CD4-positive, alpha-beta memory T cell (primary cell): ENCODE measurements at regions of chr17 and their contacts with region 1.

Region 1: DNA sequence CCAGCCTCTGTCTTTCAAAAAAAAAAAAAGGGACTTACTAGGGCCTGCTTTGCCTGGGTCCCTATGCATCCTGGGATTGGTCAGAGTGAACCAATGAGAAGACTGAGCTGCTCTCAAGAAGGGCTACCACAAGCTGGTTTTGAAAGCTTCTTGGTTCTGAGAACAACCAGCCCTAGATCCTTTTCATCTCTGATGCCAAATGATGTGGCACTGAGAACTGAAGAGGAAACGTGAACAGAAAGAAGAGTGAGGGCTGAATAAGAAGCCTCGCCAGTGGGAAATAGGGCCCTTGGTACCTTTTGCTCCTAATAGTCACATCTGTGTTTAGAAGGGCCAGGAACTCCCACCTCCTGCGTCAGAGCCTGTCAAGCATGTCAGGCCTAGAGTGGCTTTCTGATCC is 10.7 kb downstream of the TACO1 start:
- DNase-seq: peak in 4 of 5 donors; percentile 24 to 46 (median 39)
- H3K4me3 ChIP-seq: no peak overlapping the region
- H3K4me3 Mint-ChIP-seq: peak overlapping the region; percentile 9 to 80 (median 69)
- H3K27ac ChIP-seq: peak overlapping the region; percentile 46
- H3K27ac Mint-ChIP-seq: peak overlapping the region; percentile 62 to 99 (median 93)
- H3K4me1 ChIP-seq: peaks cover 36% of the 10 kb centered on the region
- H3K4me1 Mint-ChIP-seq: peaks cover 27 to 45% (median 32%) of the 10 kb centered on the region in 4 donors
- H3K27me3 ChIP-seq: no peaks in the 10 kb centered on the region
- H3K27me3 Mint-ChIP-seq: no peaks in the 10 kb centered on the region

Region 2: GRCh38 chr17:62703775-62704378 is 907.5 kb before region 1 on chr17:
- CTCF ChIA-PET with region 1: no interaction called
- POLR2A ChIA-PET with region 1: no interaction called
- intact Hi-C with region 1: loop called (anchors 5 kb)
- DNase-seq: peak in 4 of 5 donors; percentile 69 to 82 (median 72)
- H3K4me3 ChIP-seq: peak overlapping the region in 1 of 2 donors; percentile 32
- H3K4me3 Mint-ChIP-seq: peak overlapping the region in 5 of 8 donors; percentile 20 to 49 (median 34)
- H3K27ac ChIP-seq: no peak overlapping the region
- H3K27ac Mint-ChIP-seq: peak overlapping the region in 1 of 7 donors; percentile 10
- H3K4me1 ChIP-seq: peaks cover 10% of the 10 kb centered on the region
- H3K4me1 Mint-ChIP-seq: peaks cover 3 to 19% (median 4%) of the 10 kb centered on the region in 4 donors
- H3K27me3 ChIP-seq: no peaks in the 10 kb centered on the region
- H3K27me3 Mint-ChIP-seq: peaks cover 3% of the 10 kb centered on the region in 2 donors

Region 3: DNA sequence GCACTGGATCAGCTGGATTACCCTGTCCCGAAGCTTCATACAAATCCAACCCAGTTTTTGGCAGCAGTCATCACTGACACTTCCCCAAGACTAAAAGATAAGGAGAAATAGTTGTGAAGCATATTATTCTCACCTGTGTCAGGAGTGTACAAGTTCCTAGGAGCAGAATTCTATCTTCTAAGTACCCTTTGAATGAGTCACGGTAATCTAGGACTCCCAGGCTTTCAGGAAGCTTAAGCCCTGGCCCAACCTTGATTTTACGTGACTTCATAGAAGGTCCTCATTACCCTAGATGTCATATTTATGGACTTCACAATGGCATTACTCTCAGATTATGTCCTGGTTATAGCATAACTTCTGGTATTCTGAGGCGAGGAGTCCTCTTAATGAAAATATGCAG is 197.1 kb before region 1 on chr17:
- CTCF ChIA-PET with region 1: interaction called, 35 read pairs
- POLR2A ChIA-PET with region 1: interaction called, 7 read pairs
- intact Hi-C with region 1: no loop called
- DNase-seq: no peak
- H3K4me3 ChIP-seq: no peak overlapping the region
- H3K4me3 Mint-ChIP-seq: no peak overlapping the region
- H3K27ac ChIP-seq: no peak overlapping the region
- H3K27ac Mint-ChIP-seq: no peak overlapping the region
- H3K4me1 ChIP-seq: peaks cover under 1% of the 10 kb centered on the region
- H3K4me1 Mint-ChIP-seq: peaks cover 0 to 4% (median 1%) of the 10 kb centered on the region in 4 donors
- H3K27me3 ChIP-seq: no peaks in the 10 kb centered on the region
- H3K27me3 Mint-ChIP-seq: no peaks in the 10 kb centered on the region

Region 4: GRCh38 chr17:63425482-63425881 is 185.9 kb before region 1 on chr17:
- CTCF ChIA-PET with region 1: interaction called, 255 read pairs
- POLR2A ChIA-PET with region 1: interaction called, 64 read pairs
- intact Hi-C with region 1: loop called (anchors 1 kb)
- DNase-seq: peak; percentile 68 to 74 (median 72)
- H3K4me3 ChIP-seq: no peak overlapping the region
- H3K4me3 Mint-ChIP-seq: peak overlapping the region; percentile 32 to 82 (median 48)
- H3K27ac ChIP-seq: no peak overlapping the region
- H3K27ac Mint-ChIP-seq: peak overlapping the region in 5 of 7 donors; percentile 47 to 87 (median 67)
- H3K4me1 ChIP-seq: peaks cover 49% of the 10 kb centered on the region
- H3K4me1 Mint-ChIP-seq: peaks cover 26 to 54% (median 44%) of the 10 kb centered on the region in 4 donors
- H3K27me3 ChIP-seq: no peaks in the 10 kb centered on the region
- H3K27me3 Mint-ChIP-seq: no peaks in the 10 kb centered on the region

Region 5: DNA sequence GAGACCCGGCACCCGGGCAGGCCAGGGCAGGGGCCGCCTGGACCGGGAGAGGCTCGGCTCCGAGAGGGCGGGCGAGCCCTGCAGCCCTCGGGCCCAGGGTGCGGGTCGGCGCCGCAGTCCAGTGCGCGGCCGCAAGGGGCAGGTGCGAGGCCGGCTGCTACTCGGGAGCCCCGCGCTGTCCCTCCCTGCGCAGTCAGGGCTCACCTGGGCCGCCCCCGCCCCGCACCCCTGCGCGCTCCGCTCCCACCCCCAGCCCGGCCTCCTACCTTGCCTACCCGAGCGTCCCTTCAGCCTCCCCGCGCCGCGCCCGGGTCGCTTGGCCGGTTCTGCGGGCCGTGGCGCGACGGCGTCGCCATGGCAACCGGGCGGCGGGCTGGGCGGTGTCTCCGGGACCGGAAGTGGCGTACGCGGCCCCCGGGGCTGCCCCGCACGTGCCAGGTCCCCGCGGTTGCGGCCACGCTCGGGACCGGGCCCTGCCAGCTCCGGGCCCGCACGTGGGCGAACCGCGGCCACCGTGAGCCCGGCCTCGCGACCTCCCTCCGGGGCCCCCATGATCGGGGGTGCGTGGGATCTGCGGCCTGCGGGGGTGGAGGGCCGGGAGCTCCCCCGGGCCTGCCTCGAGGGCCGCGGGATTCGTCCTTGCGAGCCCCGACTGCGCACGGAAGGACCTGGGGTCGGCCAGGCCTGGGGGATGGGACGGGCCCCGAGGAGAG is 165.2 kb before region 1 on chr17 and contains the start of gene CYB561:
- CTCF ChIA-PET with region 1: interaction called, 86 read pairs
- POLR2A ChIA-PET with region 1: interaction called, 18 read pairs
- intact Hi-C with region 1: loop called (anchors 5 kb)
- DNase-seq: peak; percentile 74 to 81 (median 75)
- H3K4me3 ChIP-seq: peak within 1 kb of the TSS; percentile 67 to 73
- H3K4me3 Mint-ChIP-seq: peak within 1 kb of the TSS; percentile 80 to 89 (median 85)
- H3K27ac ChIP-seq: peak within 1 kb of the TSS; percentile 94
- H3K27ac Mint-ChIP-seq: peak within 1 kb of the TSS; percentile 91 to 98 (median 95)
- H3K4me1 ChIP-seq: peaks cover 48% of the 10 kb centered on the region
- H3K4me1 Mint-ChIP-seq: peaks cover 25 to 60% (median 43%) of the 10 kb centered on the region in 4 donors
- H3K27me3 ChIP-seq: no peaks in the 10 kb centered on the region
- H3K27me3 Mint-ChIP-seq: peaks cover 0 to 3% of the 10 kb centered on the region in 2 donors
- total RNA-seq, gene CYB561: 81.0 to 83.7 TPM

Region 6: GRCh38 chr17:63549946-63550807 is 61.2 kb before region 1 on chr17 and contains the start of gene DCAF7:
- CTCF ChIA-PET with region 1: interaction called, 16 read pairs
- POLR2A ChIA-PET with region 1: interaction called, 32 read pairs
- intact Hi-C with region 1: no loop called
- DNase-seq: peak; percentile 99 to 100 (median 99)
- H3K4me3 ChIP-seq: peak within 1 kb of the TSS; percentile 90 to 91
- H3K4me3 Mint-ChIP-seq: peak within 1 kb of the TSS; percentile 92 to 99 (median 97)
- H3K27ac ChIP-seq: peak within 1 kb of the TSS; percentile 91
- H3K27ac Mint-ChIP-seq: peak within 1 kb of the TSS; percentile 90 to 98 (median 97)
- H3K4me1 ChIP-seq: peaks cover 41% of the 10 kb centered on the region
- H3K4me1 Mint-ChIP-seq: peaks cover 26 to 51% (median 36%) of the 10 kb centered on the region in 4 donors
- H3K27me3 ChIP-seq: no peaks in the 10 kb centered on the region
- H3K27me3 Mint-ChIP-seq: no peaks in the 10 kb centered on the region
- total RNA-seq, gene DCAF7: 88.1 to 93.0 TPM

Region 7: DNA sequence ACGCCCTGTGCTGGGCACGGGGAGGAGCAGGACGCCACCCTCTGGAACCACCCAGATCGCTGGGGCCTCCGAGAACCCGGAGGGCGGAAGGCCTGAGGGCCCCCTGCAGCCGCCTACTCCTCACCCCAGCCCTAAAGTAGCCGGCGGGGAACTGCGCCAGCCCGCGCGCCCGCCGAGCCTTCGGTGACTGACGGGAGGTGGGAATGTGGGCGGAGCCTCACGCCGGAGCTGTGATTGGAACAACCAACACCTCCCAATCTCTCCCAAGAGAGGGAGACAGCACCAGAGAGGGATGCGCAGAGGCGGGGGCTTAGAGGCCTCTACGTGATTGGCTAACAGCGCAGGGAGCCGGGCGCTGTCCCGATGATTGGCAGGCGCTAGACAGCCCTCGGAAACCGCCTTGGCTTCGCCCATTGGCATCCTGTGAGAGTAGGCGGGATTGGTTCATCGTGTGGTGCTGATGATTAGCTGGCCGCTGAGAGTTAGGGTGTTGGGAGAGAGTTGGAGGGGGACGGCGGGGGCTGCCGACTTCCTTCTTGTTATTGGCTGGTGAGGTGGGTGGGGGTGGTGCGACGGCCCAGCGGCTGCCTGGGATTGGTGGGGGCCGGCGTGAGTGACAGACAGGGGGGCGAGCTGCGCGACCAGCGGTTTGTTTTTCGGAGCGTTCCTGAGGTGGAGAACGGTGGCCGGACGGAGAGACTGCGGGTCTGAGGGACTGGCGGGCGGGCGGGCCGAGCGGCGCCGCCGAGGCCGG is 10.6 kb after region 1 on chr17 and contains the start of gene MAP3K3:
- CTCF ChIA-PET with region 1: interaction called, 37 read pairs
- POLR2A ChIA-PET with region 1: interaction called, 72 read pairs
- intact Hi-C with region 1: loop called (anchors 1 kb)
- DNase-seq: peak; percentile 97 to 100 (median 98)
- H3K4me3 ChIP-seq: peak within 1 kb of the TSS; percentile 61 to 77
- H3K4me3 Mint-ChIP-seq: peak within 1 kb of the TSS; percentile 95 to 99 (median 98)
- H3K27ac ChIP-seq: peak within 1 kb of the TSS; percentile 79
- H3K27ac Mint-ChIP-seq: peak within 1 kb of the TSS; percentile 90 to 96 (median 94)
- H3K4me1 ChIP-seq: peaks cover 44% of the 10 kb centered on the region
- H3K4me1 Mint-ChIP-seq: peaks cover 29 to 50% (median 40%) of the 10 kb centered on the region in 4 donors
- H3K27me3 ChIP-seq: no peaks in the 10 kb centered on the region
- H3K27me3 Mint-ChIP-seq: no peaks in the 10 kb centered on the region
- total RNA-seq, gene MAP3K3: 98.5 to 98.8 TPM

Region 8: GRCh38 chr17:63635787-63636186 is 24.4 kb after region 1 on chr17:
- CTCF ChIA-PET with region 1: no interaction called
- POLR2A ChIA-PET with region 1: no interaction called
- intact Hi-C with region 1: no loop called
- DNase-seq: no peak
- H3K4me3 ChIP-seq: no peak overlapping the region
- H3K4me3 Mint-ChIP-seq: no peak overlapping the region
- H3K27ac ChIP-seq: no peak overlapping the region
- H3K27ac Mint-ChIP-seq: peak overlapping the region in 1 of 7 donors; percentile 69
- H3K4me1 ChIP-seq: peaks cover 22% of the 10 kb centered on the region
- H3K4me1 Mint-ChIP-seq: peaks cover 31 to 53% (median 44%) of the 10 kb centered on the region in 4 donors
- H3K27me3 ChIP-seq: no peaks in the 10 kb centered on the region
- H3K27me3 Mint-ChIP-seq: no peaks in the 10 kb centered on the region

Region 9: DNA sequence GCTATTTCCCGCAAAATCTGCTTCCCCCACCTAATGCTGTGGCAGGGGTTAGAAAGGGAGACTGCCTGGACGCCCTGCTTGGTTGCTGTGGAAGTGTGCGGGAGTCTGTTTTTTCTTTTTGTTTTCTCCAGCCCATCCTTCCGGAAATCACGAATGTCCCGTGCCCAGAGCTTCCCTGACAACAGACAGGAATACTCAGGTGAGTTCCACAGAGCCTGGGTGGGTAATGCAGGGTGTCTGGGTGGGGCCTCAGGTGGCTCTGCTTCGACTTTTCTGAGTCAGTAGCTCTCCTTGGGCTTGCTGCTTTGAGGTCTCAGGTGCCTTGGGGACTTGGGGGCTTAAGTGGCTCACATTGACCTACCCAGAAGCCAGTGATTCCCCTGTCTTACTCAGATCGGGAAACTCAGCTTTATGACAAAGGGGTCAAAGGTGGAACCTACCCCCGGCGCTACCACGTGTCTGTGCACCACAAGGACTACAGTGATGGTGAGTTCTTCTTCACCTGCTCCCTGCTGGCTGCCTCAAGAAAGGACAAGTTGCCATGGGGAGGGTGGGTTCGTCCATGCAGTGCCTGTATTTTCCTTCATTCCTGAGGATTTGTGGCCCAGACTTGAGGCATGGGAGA is 77.2 kb after region 1 on chr17:
- CTCF ChIA-PET with region 1: no interaction called
- POLR2A ChIA-PET with region 1: no interaction called
- intact Hi-C with region 1: no loop called
- DNase-seq: no peak
- H3K4me3 ChIP-seq: no peak overlapping the region
- H3K4me3 Mint-ChIP-seq: no peak overlapping the region
- H3K27ac ChIP-seq: no peak overlapping the region
- H3K27ac Mint-ChIP-seq: peak overlapping the region in 2 of 7 donors; percentile 25 to 55
- H3K4me1 ChIP-seq: no peaks in the 10 kb centered on the region
- H3K4me1 Mint-ChIP-seq: peaks cover 1 to 11% (median 7%) of the 10 kb centered on the region in 4 donors
- H3K27me3 ChIP-seq: no peaks in the 10 kb centered on the region
- H3K27me3 Mint-ChIP-seq: no peaks in the 10 kb centered on the region